Caco-2 (cell line): ENCODE measurements at regions of chr18 and their contacts with region 1.

Region 1: GRCh38 chr18:24362758-24363157 is 34.9 kb downstream of the OSBPL1A start:
- DNase-seq: peak; percentile 13 to 38
- H3K4me3 ChIP-seq: no peak overlapping the region
- H3K4me3 Mint-ChIP-seq: no peak overlapping the region
- H3K27ac Mint-ChIP-seq: no peak overlapping the region
- H3K4me1 ChIP-seq: 0 out of 2 replicates have a peak, but pooled peaks cover 5% of the 10 kb centered on the region
- H3K4me1 Mint-ChIP-seq: no peaks in the 10 kb centered on the region
- H3K27me3 ChIP-seq: no peaks in the 10 kb centered on the region
- H3K27me3 Mint-ChIP-seq: no peaks in the 10 kb centered on the region
- CTCF ChIP-seq: no peak

Region 2: GRCh38 chr18:24322584-24323136 is 40.1 kb before region 1 on chr18:
- CTCF ChIA-PET with region 1: no interaction called
- POLR2A ChIA-PET with region 1: no interaction called
- intact Hi-C with region 1: no loop called
- DNase-seq: no peak
- H3K4me3 ChIP-seq: no peak overlapping the region
- H3K4me3 Mint-ChIP-seq: no peak overlapping the region
- H3K27ac Mint-ChIP-seq: no peak overlapping the region
- H3K4me1 ChIP-seq: no peaks in the 10 kb centered on the region
- H3K4me1 Mint-ChIP-seq: no peaks in the 10 kb centered on the region
- H3K27me3 ChIP-seq: no peaks in the 10 kb centered on the region
- H3K27me3 Mint-ChIP-seq: no peaks in the 10 kb centered on the region
- CTCF ChIP-seq: no peak

Region 3: DNA sequence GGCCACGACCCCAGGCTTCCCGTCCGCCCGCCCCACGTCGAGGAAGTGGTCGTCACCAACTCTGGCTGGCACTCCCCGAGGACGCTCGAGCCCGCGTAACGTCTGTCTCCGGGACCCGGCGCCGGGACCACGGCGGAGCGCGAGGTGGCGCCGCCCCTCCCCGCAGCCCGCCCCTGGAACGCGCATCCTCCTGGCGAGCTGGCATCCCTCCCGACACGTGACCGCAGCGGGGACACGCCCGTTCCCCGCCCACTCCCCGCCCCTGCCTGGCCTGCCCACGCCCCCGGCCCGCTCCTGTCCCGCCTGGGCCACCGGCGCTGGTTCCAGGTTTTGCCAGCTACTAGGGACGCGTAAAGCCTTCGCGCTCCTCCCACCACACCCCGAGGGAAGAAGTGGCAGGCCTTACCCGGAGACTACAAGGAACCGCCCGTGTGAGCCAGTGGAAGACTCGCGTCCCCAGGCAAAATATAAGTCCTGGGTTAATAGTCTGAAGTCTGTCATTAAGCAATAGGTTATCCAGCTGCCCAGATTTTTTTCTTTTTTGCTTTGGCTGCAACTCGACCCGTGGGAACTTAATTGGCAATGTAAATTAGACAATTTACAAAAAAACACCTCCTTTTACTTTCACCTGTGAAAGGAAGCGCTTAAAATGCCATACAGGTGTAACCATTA is 35.1 kb after region 1 on chr18 and contains the start of gene OSBPL1A:
- CTCF ChIA-PET with region 1: no interaction called
- POLR2A ChIA-PET with region 1: no interaction called
- intact Hi-C with region 1: loop called (anchors 1 kb)
- DNase-seq: peak; percentile 87 to 92
- H3K4me3 ChIP-seq: peak within 1 kb of the TSS; percentile 80
- H3K4me3 Mint-ChIP-seq: peak within 1 kb of the TSS; percentile 80
- H3K27ac Mint-ChIP-seq: peak within 1 kb of the TSS; percentile 27
- H3K4me1 ChIP-seq: 0 out of 2 replicates have a peak, but pooled peaks cover 4% of the 10 kb centered on the region
- H3K4me1 Mint-ChIP-seq: no peaks in the 10 kb centered on the region
- H3K27me3 ChIP-seq: no peaks in the 10 kb centered on the region
- H3K27me3 Mint-ChIP-seq: no peaks in the 10 kb centered on the region
- CTCF ChIP-seq: no peak
- total RNA-seq, gene OSBPL1A: 15.7 and 15.9 TPM in 2 replicates

Region 4: DNA sequence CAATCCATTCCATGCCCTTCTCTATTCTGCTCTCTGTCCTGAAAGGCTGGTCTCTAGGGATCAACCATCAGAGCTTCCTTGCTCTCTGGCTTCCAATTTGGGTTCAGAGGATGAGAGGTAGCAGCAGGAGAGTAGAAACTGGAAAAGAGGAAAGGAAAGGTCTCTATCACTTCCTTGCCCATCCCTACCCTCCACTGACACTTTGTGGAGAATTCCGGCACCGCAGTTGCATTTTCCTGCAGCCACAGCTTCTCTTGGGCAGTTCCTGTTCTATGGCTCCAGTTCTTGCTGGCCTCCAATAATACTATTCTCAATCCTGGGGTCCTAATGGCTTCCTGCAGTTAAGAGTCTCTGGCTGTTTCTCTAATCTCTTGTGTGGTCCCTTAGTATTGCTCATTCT is 50.4 kb after region 1 on chr18:
- CTCF ChIA-PET with region 1: interaction called, 5 read pairs
- POLR2A ChIA-PET with region 1: no interaction called
- intact Hi-C with region 1: loop called (anchors 1 kb)
- DNase-seq: peak; percentile 21 to 30
- H3K4me3 ChIP-seq: no peak overlapping the region
- H3K4me3 Mint-ChIP-seq: no peak overlapping the region
- H3K27ac Mint-ChIP-seq: no peak overlapping the region
- H3K4me1 ChIP-seq: no peaks in the 10 kb centered on the region
- H3K4me1 Mint-ChIP-seq: no peaks in the 10 kb centered on the region
- H3K27me3 ChIP-seq: no peaks in the 10 kb centered on the region
- H3K27me3 Mint-ChIP-seq: no peaks in the 10 kb centered on the region
- CTCF ChIP-seq: peak in 1 of 2 experiments; percentile 26

Region 5: GRCh38 chr18:24426073-24426397 is 63.3 kb after region 1 on chr18:
- CTCF ChIA-PET with region 1: no interaction called
- POLR2A ChIA-PET with region 1: no interaction called
- intact Hi-C with region 1: no loop called
- DNase-seq: no peak
- H3K4me3 ChIP-seq: peak overlapping the region; percentile 61
- H3K4me3 Mint-ChIP-seq: peak overlapping the region; percentile 86
- H3K27ac Mint-ChIP-seq: peak overlapping the region; percentile 93
- H3K4me1 ChIP-seq: peaks cover 6% of the 10 kb centered on the region
- H3K4me1 Mint-ChIP-seq: peaks cover 14% of the 10 kb centered on the region
- H3K27me3 ChIP-seq: no peaks in the 10 kb centered on the region
- H3K27me3 Mint-ChIP-seq: no peaks in the 10 kb centered on the region
- CTCF ChIP-seq: no peak